Gastrocnemius medialis (tissue), 4 donors: ENCODE measurements at regions of chr1 and their contacts with region 1.

Region 1: GRCh38 chr1:178037503-178038253 is 56.2 kb upstream of the RASAL2 start:
- DNase-seq: peak; percentile 70 to 81
- ATAC-seq: peak; percentile 89 to 92
- H3K4me3 ChIP-seq: peak overlapping the region; percentile 61 to 92 (median 87)
- H3K27ac ChIP-seq: peak overlapping the region; percentile 80 to 89 (median 83)
- H3K4me1 ChIP-seq: peaks cover 24 to 44% of the 10 kb centered on the region in 2 donors
- H3K27me3 ChIP-seq: no peaks in the 10 kb centered on the region
- CTCF ChIP-seq: peak; percentile 33 to 68 (median 55)
- POLR2A ChIP-seq: no peak

Region 2: DNA sequence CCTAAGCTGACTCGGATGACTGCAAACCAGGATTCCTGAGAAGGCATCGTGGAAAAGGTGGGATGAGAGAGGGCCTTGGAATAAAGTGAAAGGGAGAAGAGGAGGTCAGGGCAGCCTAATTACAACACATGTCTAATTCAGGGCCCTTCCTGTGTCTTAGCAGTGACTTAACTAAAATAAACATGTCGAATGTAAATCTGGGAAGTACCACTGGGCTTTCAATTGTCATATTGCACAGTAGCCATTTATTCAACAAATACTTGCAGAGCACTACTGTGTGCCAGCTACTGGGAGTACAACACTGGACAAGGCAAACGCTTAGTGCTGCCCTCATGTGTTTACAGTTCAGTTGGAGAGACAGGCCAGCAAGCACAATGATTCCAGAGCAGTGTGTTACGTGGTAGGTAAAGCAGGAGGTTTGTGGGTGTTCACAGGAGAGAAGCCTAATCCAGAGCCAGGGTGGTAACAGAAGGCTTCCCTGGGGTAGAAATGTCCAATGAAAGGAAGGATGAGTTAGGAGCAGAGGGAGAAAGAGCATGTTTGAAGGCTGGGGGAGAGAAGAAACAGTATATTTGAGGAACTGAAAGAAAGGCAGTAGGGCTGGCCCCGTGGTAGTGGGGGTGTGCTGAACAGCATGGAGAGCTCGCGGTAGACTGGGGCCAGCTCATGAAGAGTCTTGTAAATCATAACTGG is 18.2 kb after region 1 on chr1:
- in situ Hi-C with region 1: no loop called
- intact Hi-C with region 1: no loop called
- DNase-seq: peak in 1 of 2 donors; percentile 18
- ATAC-seq: peak in 1 of 2 donors; percentile 55
- H3K4me3 ChIP-seq: no peak overlapping the region
- H3K27ac ChIP-seq: peak overlapping the region; percentile 63 to 78 (median 71)
- H3K4me1 ChIP-seq: peaks cover 32 to 69% of the 10 kb centered on the region in 2 donors
- H3K27me3 ChIP-seq: no peaks in the 10 kb centered on the region
- CTCF ChIP-seq: peak in 2 of 5 experiments; percentile 35 to 40
- POLR2A ChIP-seq: no peak

Region 3: DNA sequence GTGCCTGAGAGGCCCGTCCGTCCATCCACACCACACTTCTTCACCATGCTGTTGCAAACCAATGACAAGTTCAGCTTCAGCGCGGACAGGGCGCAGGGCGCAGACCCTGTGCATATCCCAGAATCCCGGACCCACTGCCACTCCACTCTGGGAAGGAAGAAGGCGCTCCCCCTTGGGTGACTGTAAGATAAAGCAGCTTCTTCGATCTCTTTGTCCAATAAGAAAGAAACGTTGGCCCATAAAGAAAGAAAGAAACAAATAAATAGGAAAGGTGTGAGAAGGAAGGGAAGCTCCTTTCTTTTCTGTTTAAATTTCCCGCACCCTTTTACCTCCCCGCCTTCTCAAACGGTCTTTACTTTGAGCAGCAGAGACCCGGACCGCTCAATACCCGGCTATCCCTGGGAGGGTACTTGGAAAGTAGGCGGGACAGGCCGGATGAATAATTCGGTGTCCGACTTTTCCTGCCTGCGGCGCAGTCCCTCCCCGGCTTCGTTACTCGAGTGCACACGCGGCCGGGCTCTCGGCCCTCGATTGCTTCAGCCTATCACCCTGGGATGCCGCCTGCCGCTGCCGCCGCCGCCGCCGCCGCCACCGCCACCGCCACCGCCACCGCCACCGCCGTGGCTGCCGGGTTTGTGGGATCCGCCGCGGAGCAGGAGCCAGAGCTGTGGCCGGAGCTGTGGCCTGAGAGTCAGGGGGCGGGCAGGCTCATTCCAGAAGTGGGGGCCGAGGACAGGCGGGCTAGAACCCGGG is 55.7 kb after region 1 on chr1:
- in situ Hi-C with region 1: no loop called
- intact Hi-C with region 1: loop called (anchors 2 kb)
- DNase-seq: peak; percentile 82 to 87
- ATAC-seq: peak; percentile 93
- H3K4me3 ChIP-seq: peak overlapping the region; percentile 89 to 92 (median 91)
- H3K27ac ChIP-seq: peak overlapping the region; percentile 84 to 90 (median 86)
- H3K4me1 ChIP-seq: peaks cover 22 to 26% of the 10 kb centered on the region in 2 donors
- H3K27me3 ChIP-seq: no peaks in the 10 kb centered on the region
- CTCF ChIP-seq: no peak
- POLR2A ChIP-seq: no peak